HCT116 (cell line): ENCODE measurements at regions of chr12 and their contacts with region 1.

Region 1: GRCh38 chr12:118372541-118373495 is at the start of gene TAOK3:
- DNase-seq: peak; percentile 97
- ATAC-seq: peak; percentile 91
- H3K4me3 ChIP-seq: peak within 1 kb of the TSS; percentile 83 to 89
- H3K27ac ChIP-seq: peak within 1 kb of the TSS; percentile 33
- H3K4me1 ChIP-seq: peaks cover 0 to 35% of the 10 kb centered on the region in 2 experiments; a peak in 3 of 4 replicates
- H3K27me3 ChIP-seq: no peaks in the 10 kb centered on the region
- CTCF ChIP-seq: no peak
- POLR2A ChIP-seq: peak; percentile 84
- RAD21 ChIP-seq: no peak
- total RNA-seq, gene TAOK3: 10.5 TPM

Region 2: GRCh38 chr12:117874842-117875434 is 497.9 kb before region 1 on chr12:
- CTCF ChIA-PET with region 1: interaction called, 11 read pairs
- POLR2A ChIA-PET with region 1: no interaction called
- RAD21 ChIA-PET with region 1: no interaction called
- intact Hi-C with region 1: loop called (anchors 5 kb)
- DNase-seq: peak; percentile 57
- ATAC-seq: peak; percentile 84
- H3K4me3 ChIP-seq: no peak overlapping the region
- H3K27ac ChIP-seq: no peak overlapping the region
- H3K4me1 ChIP-seq: peaks cover 7 to 25% of the 10 kb centered on the region in 2 experiments; a peak in 3 of 4 replicates
- H3K27me3 ChIP-seq: no peaks in the 10 kb centered on the region
- CTCF ChIP-seq: peak; percentile 84 to 92 (median 84)
- POLR2A ChIP-seq: no peak
- RAD21 ChIP-seq: peak; percentile 98

Region 3: GRCh38 chr12:118120579-118121363 is 252.0 kb before region 1 on chr12:
- CTCF ChIA-PET with region 1: interaction called, 62 read pairs
- POLR2A ChIA-PET with region 1: interaction called, 9 read pairs
- RAD21 ChIA-PET with region 1: interaction called, 4 to 7 read pairs
- intact Hi-C with region 1: loop called (anchors 1 kb)
- DNase-seq: no peak
- ATAC-seq: peak; percentile 89
- H3K4me3 ChIP-seq: no peak overlapping the region
- H3K27ac ChIP-seq: peak overlapping the region; percentile 36; the same call in 1 of the 2 replicates
- H3K4me1 ChIP-seq: peaks cover 4 to 10% of the 10 kb centered on the region in 2 experiments; a peak in 3 of 4 replicates
- H3K27me3 ChIP-seq: no peaks in the 10 kb centered on the region
- CTCF ChIP-seq: peak; percentile 39 to 52 (median 46); a peak in 4 of 6 replicates
- POLR2A ChIP-seq: no peak
- RAD21 ChIP-seq: peak; percentile 66

Region 4: GRCh38 chr12:118135788-118136558 is 236.8 kb before region 1 on chr12 and contains the start of gene PEBP1:
- CTCF ChIA-PET with region 1: interaction called, 11 read pairs
- POLR2A ChIA-PET with region 1: interaction called, 3 read pairs
- RAD21 ChIA-PET with region 1: no interaction called
- intact Hi-C with region 1: no loop called
- DNase-seq: peak; percentile 85
- ATAC-seq: peak; percentile 96
- H3K4me3 ChIP-seq: peak within 1 kb of the TSS; percentile 91 to 94
- H3K27ac ChIP-seq: peak within 1 kb of the TSS; percentile 81
- H3K4me1 ChIP-seq: peaks cover 21 to 29% of the 10 kb centered on the region in 2 experiments
- H3K27me3 ChIP-seq: no peaks in the 10 kb centered on the region
- CTCF ChIP-seq: no peak
- POLR2A ChIP-seq: peak; percentile 88
- RAD21 ChIP-seq: no peak
- total RNA-seq, gene PEBP1: 220 TPM

Region 5: DNA sequence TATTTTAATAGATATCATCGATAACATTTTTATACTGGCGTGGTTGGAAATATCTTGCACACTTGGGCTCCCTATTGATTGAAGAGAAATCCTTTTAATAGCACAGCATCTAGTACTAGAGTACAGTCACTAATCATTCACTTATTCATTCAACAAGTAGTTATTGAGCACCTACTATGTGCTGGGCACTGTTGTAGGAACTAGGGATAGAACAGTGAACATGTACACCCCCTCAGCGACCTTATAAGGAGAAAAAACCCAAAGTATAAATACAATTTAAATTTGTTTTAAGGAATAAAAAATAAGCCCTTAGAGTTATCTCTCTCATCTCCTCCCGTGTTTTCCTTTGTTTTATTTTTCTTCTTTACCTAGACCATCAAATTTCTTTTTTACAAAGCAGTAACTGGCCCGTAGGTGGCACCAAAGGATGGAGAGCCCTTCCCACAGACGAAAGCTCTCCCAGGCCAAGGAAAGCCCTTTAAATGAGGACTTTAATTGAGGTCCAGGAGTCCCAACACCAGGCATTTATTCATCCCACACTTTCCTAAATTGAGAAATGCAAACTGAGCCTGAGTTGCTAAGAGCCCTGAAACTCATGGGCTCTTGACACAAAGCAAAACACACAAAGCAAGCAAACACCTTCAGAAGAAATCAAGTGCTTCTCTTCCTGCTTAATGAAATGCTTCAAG is 207.9 kb before region 1 on chr12:
- CTCF ChIA-PET with region 1: interaction called, 51 read pairs
- POLR2A ChIA-PET with region 1: interaction called, 3 read pairs
- RAD21 ChIA-PET with region 1: interaction called in 1 of 2 experiments, 4 read pairs
- intact Hi-C with region 1: loop called (anchors 1 kb)
- DNase-seq: peak; percentile 18
- ATAC-seq: peak; percentile 91
- H3K4me3 ChIP-seq: no peak overlapping the region
- H3K27ac ChIP-seq: no peak overlapping the region
- H3K4me1 ChIP-seq: no peaks in the 10 kb centered on the region
- H3K27me3 ChIP-seq: no peaks in the 10 kb centered on the region
- CTCF ChIP-seq: peak; percentile 68 to 80 (median 73)
- POLR2A ChIP-seq: no peak
- RAD21 ChIP-seq: peak; percentile 89

Region 6: DNA sequence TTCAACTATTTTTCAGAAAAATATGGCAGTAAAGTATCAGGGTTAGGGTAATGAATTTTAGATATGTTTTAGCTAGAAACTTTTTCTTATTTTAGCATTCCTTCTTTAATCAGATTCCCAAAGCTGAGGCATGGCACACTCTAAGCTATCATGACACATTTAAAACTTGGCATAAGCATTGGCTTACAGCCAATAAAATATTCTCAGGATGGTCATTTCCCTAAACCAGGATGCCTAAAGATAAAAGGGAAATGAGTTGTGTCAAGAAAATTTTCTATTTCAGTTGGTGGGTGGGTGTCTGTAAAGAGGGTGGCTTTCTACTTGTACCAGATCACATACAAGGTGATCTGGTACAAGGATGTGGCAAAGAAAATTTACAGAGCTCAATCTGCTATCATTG is 189.1 kb before region 1 on chr12:
- CTCF ChIA-PET with region 1: interaction called, 76 read pairs
- POLR2A ChIA-PET with region 1: interaction called, 4 read pairs
- RAD21 ChIA-PET with region 1: interaction called, 3 to 6 read pairs
- intact Hi-C with region 1: loop called (anchors 1 kb)
- DNase-seq: no peak
- ATAC-seq: no peak
- H3K4me3 ChIP-seq: no peak overlapping the region
- H3K27ac ChIP-seq: no peak overlapping the region
- H3K4me1 ChIP-seq: peaks cover 0 to 3% of the 10 kb centered on the region in 2 experiments; a peak in 2 of 4 replicates
- H3K27me3 ChIP-seq: no peaks in the 10 kb centered on the region
- CTCF ChIP-seq: no peak
- POLR2A ChIP-seq: no peak
- RAD21 ChIP-seq: no peak

Region 7: GRCh38 chr12:118337194-118337838 is 35.5 kb before region 1 on chr12:
- CTCF ChIA-PET with region 1: no interaction called
- POLR2A ChIA-PET with region 1: no interaction called
- RAD21 ChIA-PET with region 1: no interaction called
- intact Hi-C with region 1: no loop called
- DNase-seq: no peak
- ATAC-seq: no peak
- H3K4me3 ChIP-seq: no peak overlapping the region
- H3K27ac ChIP-seq: no peak overlapping the region
- H3K4me1 ChIP-seq: no peaks in the 10 kb centered on the region
- H3K27me3 ChIP-seq: no peaks in the 10 kb centered on the region
- CTCF ChIP-seq: no peak
- POLR2A ChIP-seq: no peak
- RAD21 ChIP-seq: no peak

Region 8: DNA sequence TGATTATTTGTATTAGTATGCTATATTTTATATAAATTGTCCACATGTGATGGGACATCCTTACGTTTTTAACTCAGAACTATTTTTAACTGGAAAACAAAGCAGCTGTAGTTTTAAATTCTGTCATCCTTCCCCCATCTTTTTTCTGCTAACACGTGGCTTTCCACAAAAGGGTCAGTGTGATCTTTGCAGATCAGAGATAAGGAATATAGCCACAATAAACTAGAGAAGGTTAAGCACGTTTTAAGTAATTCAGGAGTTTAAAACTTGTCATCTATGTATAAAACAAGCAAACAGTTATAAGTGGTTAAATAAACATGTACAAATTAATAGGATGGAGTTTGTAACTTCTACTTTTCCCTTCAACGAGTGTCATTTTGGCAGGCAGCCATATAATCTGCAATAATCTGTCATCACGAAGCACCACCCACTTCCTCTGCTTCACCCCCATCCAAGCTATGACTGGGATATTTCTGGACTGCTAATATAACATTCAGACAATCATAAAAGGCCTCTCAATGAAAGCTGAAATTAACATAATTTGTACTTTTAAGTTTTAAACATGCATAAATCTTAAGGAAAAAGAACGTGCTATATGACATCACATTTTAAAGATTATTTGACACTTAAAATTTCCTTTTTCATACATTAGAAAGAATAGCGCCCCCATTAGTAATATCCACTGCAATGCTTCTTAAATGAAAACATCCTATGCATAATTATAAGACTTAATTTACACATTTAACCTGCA is 15.4 kb before region 1 on chr12:
- CTCF ChIA-PET with region 1: interaction called, 31 read pairs
- POLR2A ChIA-PET with region 1: interaction called, 4 read pairs
- RAD21 ChIA-PET with region 1: no interaction called
- intact Hi-C with region 1: no loop called
- DNase-seq: peak; percentile 63
- ATAC-seq: peak; percentile 60; the same call in 1 of the 2 replicates
- H3K4me3 ChIP-seq: peak overlapping the region in 1 of 2 experiments; percentile 2; a peak in 1 of 4 replicates
- H3K27ac ChIP-seq: no peak overlapping the region; the same call in 1 of the 2 replicates
- H3K4me1 ChIP-seq: peaks cover 22 to 30% of the 10 kb centered on the region in 2 experiments
- H3K27me3 ChIP-seq: no peaks in the 10 kb centered on the region
- CTCF ChIP-seq: peak in 2 of 3 experiments; percentile 18 to 51; a peak in 2 of 6 replicates
- POLR2A ChIP-seq: no peak
- RAD21 ChIP-seq: 0 out of 2 replicates have a peak, but pooled peaks have one; percentile 16